ENCODE measurements at regions of chr11 and their contacts with region 1.

Region 1: DNA sequence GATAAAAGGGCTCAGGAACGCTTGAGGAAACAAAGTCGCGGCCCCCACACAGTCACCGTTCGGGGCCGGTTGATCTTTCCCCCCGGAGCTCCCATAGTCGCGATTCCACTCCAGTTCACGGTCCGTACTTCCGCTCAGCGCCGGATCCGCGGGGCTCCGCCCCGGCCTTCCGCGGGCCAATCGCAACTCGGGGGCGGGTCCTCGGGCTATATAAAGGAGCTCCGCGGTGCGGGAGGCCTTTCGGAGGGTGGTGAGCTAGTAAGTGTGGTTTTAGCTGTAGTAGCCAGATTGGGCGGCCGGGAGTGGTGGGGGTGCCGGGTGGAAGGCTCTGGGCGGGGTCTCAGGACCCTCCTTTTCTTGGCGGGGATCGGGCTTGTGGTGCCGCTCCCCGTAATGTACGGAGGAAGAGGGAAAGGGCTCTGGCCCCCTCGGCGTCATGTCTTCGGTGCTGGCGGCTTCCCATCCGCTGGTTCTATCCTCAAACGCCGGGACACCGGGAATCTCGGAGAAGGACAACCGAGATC is at the starts of genes C11orf98 and CSKMT:
- DNase-seq: peak; percentile 89 to 98 (median 96)
- ATAC-seq: peak; percentile 89 to 91
- H3K4me3 Mint-ChIP-seq: peak within 1 kb of the TSS; percentile 94 to 98 (median 95)
- H3K27ac Mint-ChIP-seq: peak within 1 kb of the TSS; percentile 86 to 97 (median 96)
- H3K4me1 Mint-ChIP-seq: peaks cover 22 to 49% (median 42%) of the 10 kb centered on the region in 4 donors
- H3K27me3 Mint-ChIP-seq: no peaks in the 10 kb centered on the region
- polyA plus RNA-seq, gene C11orf98: 99.9 to 149 (median 117) TPM
- polyA plus RNA-seq, gene CSKMT: 1.8 to 3.7 (median 3.4) TPM

Region 2: GRCh38 chr11:62573592-62574362 is 91.4 kb before region 1 on chr11 and contains the start of gene EEF1G:
- POLR2A ChIA-PET with region 1: interaction called, 30 read pairs
- DNase-seq: peak; percentile 94 to 100 (median 98)
- ATAC-seq: peak; percentile 91 to 92
- H3K4me3 Mint-ChIP-seq: peak within 1 kb of the TSS; percentile 93 to 99 (median 97)
- H3K27ac Mint-ChIP-seq: peak within 1 kb of the TSS; percentile 90 to 99 (median 98)
- H3K4me1 Mint-ChIP-seq: peaks cover 41 to 59% (median 53%) of the 10 kb centered on the region in 4 donors
- H3K27me3 Mint-ChIP-seq: no peaks in the 10 kb centered on the region
- polyA plus RNA-seq, gene EEF1G: 1,637 to 2,152 (median 1,960) TPM

Region 3: GRCh38 chr11:62621567-62622470 is 43.3 kb before region 1 on chr11 and contains the start of gene B3GAT3:
- POLR2A ChIA-PET with region 1: interaction called, 77 read pairs
- DNase-seq: peak; percentile 87 to 98 (median 95)
- ATAC-seq: peak; percentile 83 to 85
- H3K4me3 Mint-ChIP-seq: peak within 1 kb of the TSS; percentile 86 to 97 (median 94)
- H3K27ac Mint-ChIP-seq: peak within 1 kb of the TSS; percentile 92 to 99 (median 98)
- H3K4me1 Mint-ChIP-seq: peaks cover 13 to 36% (median 32%) of the 10 kb centered on the region in 4 donors
- H3K27me3 Mint-ChIP-seq: peaks cover 0 to 2% (median 0%) of the 10 kb centered on the region in 5 donors
- polyA plus RNA-seq, gene B3GAT3: 35.6 to 51.3 (median 40.3) TPM

Region 4: DNA sequence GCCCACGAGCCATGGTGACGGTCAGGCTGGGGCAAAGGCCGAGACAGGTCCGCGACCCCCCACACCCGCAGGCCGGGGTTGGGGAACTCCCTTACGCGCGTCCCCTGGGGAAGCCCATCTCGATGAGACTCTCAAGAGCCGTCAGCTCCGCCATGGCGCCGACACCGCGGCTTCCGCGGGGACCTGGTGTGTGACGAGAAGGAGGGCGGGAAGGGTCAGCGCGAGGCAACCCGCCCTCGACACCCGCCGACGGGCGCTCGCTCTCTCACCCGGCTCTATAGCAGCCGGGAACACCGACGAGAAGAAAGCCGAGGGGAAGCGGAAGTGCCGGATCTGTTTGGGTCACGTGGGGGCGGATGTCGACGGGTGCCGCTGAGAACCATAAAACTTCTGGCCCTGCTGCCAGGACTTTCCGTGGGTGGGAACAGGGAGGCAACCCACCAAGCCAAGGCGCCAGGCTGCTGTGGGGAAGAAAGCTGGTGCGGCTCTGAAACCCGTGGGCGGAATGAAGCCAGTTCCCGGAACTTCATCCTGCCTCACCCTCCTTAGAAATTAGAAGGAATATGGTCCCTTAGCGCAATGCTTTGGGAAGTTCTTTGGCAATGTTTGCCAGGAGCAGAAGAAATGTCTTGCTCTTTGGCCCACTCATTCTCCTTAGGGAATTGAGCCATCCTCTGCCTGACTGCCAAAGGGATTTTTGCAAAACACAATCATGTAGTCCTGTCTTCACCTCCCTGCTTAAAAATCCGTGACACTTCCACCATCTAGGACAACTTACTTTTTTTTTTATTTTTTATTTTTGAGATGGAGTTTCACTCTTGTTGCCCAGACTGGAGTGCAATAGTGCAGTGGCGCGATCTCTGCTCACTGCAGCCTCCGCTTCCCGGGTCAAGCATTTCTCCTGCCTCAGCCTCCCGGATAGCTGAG is 13.9 kb after region 1 on chr11 and contains the start of gene UBXN1:
- POLR2A ChIA-PET with region 1: interaction called, 59 read pairs
- DNase-seq: peak; percentile 68 to 89 (median 78)
- ATAC-seq: peak; percentile 84 to 87
- H3K4me3 Mint-ChIP-seq: peak within 1 kb of the TSS; percentile 86 to 94 (median 90)
- H3K27ac Mint-ChIP-seq: peak within 1 kb of the TSS; percentile 94 to 98 (median 95)
- H3K4me1 Mint-ChIP-seq: peaks cover 19 to 42% (median 38%) of the 10 kb centered on the region in 4 donors
- H3K27me3 Mint-ChIP-seq: no peaks in the 10 kb centered on the region
- polyA plus RNA-seq, gene UBXN1: 188 to 219 (median 218) TPM

Region 5: GRCh38 chr11:62841361-62842184 is 176.4 kb after region 1 on chr11:
- POLR2A ChIA-PET with region 1: interaction called, 30 read pairs
- DNase-seq: peak; percentile 54 to 94 (median 86)
- ATAC-seq: peak; percentile 57 to 61
- H3K4me3 Mint-ChIP-seq: no peak overlapping the region
- H3K27ac Mint-ChIP-seq: no peak overlapping the region
- H3K4me1 Mint-ChIP-seq: peaks cover 13 to 31% (median 25%) of the 10 kb centered on the region in 4 donors
- H3K27me3 Mint-ChIP-seq: no peaks in the 10 kb centered on the region